Activated T-helper 2 cell treated with anti-CD3 and anti-CD28 coated beads, Interferon-gamma antibody, Interleukin-2, Interleukin-4, amounts not matched to agents 10 μg/mL and 5 μg/mL and 100 μg/mL, durations not matched to agents 14 hours and 24 hours and 36 hours (primary cell): ENCODE measurements at regions of chr11 and their contacts with region 1.

Region 1: DNA sequence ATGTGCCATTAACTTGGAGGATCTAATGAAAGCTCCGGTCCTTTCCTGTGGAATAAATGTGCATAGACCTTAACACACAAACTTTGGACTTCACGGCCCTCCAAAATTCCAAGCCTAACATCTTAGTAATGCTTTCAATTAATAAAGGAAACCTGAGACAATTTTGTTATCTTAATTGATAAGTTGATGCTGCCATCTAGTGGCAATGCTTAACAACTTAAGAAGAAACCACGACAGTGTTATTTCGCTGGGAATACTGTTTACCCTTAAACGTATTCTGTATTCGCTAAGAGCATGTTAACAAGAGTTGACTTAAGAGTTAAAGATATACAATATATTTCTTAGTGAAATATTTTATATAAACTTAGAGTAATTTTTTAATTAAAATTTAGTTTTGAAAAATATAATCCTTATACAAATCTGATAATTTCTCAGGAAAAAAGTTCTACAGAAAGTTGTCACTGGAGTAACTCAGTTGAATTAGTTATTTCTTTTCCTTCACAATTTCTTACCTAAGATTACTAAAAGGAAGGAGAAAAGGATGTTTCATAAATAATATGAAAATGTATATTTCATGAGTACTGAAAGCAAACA is 35.0 kb upstream of the OR9G4 start:
- DNase-seq: no peak
- H3K4me3 Mint-ChIP-seq: no peak overlapping the region
- H3K27ac Mint-ChIP-seq: no peak overlapping the region
- H3K4me1 Mint-ChIP-seq: no peaks in the 10 kb centered on the region
- H3K27me3 Mint-ChIP-seq: no peaks in the 10 kb centered on the region

Region 2: DNA sequence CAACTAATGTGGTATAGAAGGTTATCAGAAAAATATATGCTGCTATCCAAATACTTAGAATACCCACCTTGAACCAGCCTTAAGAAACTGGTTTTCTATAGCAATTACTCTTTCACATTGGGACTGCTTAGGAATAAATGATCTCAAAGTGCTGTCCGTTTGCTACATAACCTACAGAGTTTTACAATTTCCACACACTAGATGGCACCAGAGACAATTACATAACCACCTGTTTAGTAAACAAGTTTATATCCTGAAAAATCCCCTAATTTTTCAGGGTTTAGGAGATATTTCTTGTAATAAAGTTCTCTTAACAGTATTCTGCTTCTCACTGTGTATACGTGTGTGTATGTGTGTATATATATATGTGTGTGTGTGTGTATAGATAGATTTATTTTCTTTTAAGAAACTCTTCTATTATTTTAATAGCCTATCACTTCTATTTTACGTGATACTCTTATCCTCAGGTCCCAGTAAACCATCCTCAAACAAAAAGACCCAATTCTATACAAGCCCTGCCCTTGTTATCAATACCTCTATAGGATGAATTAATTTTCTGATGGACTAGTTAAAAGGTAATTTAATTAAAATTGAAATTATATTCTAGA is 840.7 kb before region 1 on chr11:
- intact Hi-C with region 1: loop called (anchors 10 kb)
- DNase-seq: no peak
- H3K4me3 Mint-ChIP-seq: no peak overlapping the region
- H3K27ac Mint-ChIP-seq: no peak overlapping the region
- H3K4me1 Mint-ChIP-seq: no peaks in the 10 kb centered on the region
- H3K27me3 Mint-ChIP-seq: no peaks in the 10 kb centered on the region

Region 3: DNA sequence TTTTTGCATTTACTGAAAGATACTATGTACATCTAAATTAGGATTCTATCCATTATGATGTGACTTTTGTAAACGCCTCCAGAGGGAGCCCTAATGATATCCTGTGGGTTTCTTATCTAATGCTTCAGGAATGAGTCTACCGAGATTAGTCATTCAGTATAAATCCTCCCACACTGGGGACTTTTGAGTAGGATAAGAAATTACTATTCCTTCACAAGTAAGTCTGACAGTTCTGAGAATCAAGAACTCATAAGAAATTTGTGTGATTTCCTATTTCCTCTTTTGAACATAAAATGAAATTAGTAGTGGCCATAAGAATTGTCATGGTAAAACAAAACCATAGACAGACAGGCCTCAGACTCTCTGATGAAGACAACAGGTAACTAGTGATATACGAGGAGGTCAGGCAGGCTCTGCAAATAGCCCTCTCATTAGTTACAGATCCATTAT is 158.9 kb before region 1 on chr11:
- intact Hi-C with region 1: loop called (anchors 1 kb)
- DNase-seq: no peak
- H3K4me3 Mint-ChIP-seq: no peak overlapping the region
- H3K27ac Mint-ChIP-seq: no peak overlapping the region
- H3K4me1 Mint-ChIP-seq: peaks cover 2% of the 10 kb centered on the region
- H3K27me3 Mint-ChIP-seq: no peaks in the 10 kb centered on the region